Activated CD4-positive, alpha-beta T cell treated with anti-CD3 and anti-CD28 coated beads, Interleukin-2, amount 10 ng/mL, durations not matched to agents 24 days and 14 days (primary cell): ENCODE measurements at regions of chr2 and their contacts with region 1.

Region 1: GRCh38 chr2:68766376-68766845 is 31.8 kb downstream of the ARHGAP25 start:
- DNase-seq: peak; percentile 92
- H3K4me3 Mint-ChIP-seq: peak overlapping the region; percentile 76
- H3K27ac Mint-ChIP-seq: peak overlapping the region; percentile 95
- H3K4me1 Mint-ChIP-seq: peaks cover 86% of the 10 kb centered on the region
- H3K27me3 Mint-ChIP-seq: no peaks in the 10 kb centered on the region

Region 2: GRCh38 chr2:68653538-68653982 is 112.9 kb before region 1 on chr2:
- intact Hi-C with region 1: loop called (anchors 1 kb)
- DNase-seq: peak; percentile 88
- H3K4me3 Mint-ChIP-seq: peak overlapping the region; percentile 66
- H3K27ac Mint-ChIP-seq: peak overlapping the region; percentile 71
- H3K4me1 Mint-ChIP-seq: peaks cover 46% of the 10 kb centered on the region
- H3K27me3 Mint-ChIP-seq: peaks cover 36% of the 10 kb centered on the region

Region 3: GRCh38 chr2:68726608-68727367 is 39.6 kb before region 1 on chr2:
- intact Hi-C with region 1: loop called (anchors 2 kb)
- DNase-seq: peak; percentile 92
- H3K4me3 Mint-ChIP-seq: peak overlapping the region; percentile 56
- H3K27ac Mint-ChIP-seq: peak overlapping the region; percentile 82
- H3K4me1 Mint-ChIP-seq: peaks cover 70% of the 10 kb centered on the region
- H3K27me3 Mint-ChIP-seq: no peaks in the 10 kb centered on the region

Region 4: GRCh38 chr2:68741238-68741637 is 25.2 kb before region 1 on chr2:
- intact Hi-C with region 1: loop called (anchors 1 kb)
- DNase-seq: peak; percentile 73
- H3K4me3 Mint-ChIP-seq: no peak overlapping the region
- H3K27ac Mint-ChIP-seq: peak overlapping the region; percentile 98
- H3K4me1 Mint-ChIP-seq: peaks cover 85% of the 10 kb centered on the region
- H3K27me3 Mint-ChIP-seq: no peaks in the 10 kb centered on the region

Region 5: DNA sequence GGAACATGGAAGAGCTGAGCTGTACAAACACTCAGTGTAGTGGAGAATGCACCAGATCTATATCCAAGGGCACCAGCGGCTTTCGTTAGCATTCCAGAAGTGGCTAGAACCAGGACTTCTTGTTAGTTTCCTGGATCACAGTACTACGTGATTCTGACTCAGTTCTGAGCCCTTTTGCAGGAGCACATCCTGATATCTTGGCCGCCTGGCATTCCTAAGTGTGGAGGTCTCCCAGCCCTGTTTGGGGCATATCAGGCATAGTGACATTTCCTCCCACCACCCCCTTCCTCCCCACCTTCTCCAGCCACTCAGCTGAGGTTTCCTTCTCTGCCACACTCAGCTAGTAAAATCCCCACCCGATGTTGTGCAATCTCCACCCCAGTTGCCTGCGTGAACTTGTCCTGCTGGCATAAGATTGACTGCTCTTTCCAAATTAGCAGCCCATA is 41.4 kb after region 1 on chr2:
- intact Hi-C with region 1: no loop called
- DNase-seq: no peak
- H3K4me3 Mint-ChIP-seq: no peak overlapping the region
- H3K27ac Mint-ChIP-seq: no peak overlapping the region
- H3K4me1 Mint-ChIP-seq: peaks cover 27% of the 10 kb centered on the region
- H3K27me3 Mint-ChIP-seq: no peaks in the 10 kb centered on the region

Region 6: DNA sequence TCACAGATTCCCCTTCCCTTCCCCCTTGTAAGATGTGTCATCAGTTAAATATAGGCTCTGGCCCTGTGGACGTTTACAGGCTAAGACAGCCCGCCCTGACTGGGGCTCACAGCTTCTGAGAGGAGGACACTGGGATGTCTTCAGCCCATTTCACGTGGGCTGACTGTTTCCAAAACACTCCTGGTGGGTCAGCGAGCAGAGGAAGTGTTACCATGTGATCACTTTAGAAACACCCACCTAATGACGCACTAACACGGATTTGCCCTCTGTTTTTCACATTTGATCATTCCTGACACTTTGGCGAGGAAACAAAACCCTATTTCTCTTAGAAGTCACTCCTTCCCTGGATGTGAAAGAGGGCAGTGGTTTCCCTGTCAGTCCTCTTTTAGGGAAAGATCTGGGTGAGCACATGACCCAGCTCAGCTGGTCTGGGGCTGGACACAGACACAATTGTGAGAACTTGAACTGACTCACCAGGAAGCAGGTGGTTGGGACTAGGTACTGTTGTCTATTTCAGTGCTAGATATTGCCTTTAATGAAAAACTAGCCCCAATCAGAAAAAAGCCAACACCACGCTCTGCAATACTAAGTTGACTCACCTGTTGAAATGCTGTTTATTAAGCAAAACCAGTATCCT is 65.9 kb after region 1 on chr2:
- intact Hi-C with region 1: loop called (anchors 2 kb)
- DNase-seq: peak; percentile 74
- H3K4me3 Mint-ChIP-seq: peak overlapping the region; percentile 57
- H3K27ac Mint-ChIP-seq: peak overlapping the region; percentile 85
- H3K4me1 Mint-ChIP-seq: peaks cover 73% of the 10 kb centered on the region
- H3K27me3 Mint-ChIP-seq: no peaks in the 10 kb centered on the region

Region 7: DNA sequence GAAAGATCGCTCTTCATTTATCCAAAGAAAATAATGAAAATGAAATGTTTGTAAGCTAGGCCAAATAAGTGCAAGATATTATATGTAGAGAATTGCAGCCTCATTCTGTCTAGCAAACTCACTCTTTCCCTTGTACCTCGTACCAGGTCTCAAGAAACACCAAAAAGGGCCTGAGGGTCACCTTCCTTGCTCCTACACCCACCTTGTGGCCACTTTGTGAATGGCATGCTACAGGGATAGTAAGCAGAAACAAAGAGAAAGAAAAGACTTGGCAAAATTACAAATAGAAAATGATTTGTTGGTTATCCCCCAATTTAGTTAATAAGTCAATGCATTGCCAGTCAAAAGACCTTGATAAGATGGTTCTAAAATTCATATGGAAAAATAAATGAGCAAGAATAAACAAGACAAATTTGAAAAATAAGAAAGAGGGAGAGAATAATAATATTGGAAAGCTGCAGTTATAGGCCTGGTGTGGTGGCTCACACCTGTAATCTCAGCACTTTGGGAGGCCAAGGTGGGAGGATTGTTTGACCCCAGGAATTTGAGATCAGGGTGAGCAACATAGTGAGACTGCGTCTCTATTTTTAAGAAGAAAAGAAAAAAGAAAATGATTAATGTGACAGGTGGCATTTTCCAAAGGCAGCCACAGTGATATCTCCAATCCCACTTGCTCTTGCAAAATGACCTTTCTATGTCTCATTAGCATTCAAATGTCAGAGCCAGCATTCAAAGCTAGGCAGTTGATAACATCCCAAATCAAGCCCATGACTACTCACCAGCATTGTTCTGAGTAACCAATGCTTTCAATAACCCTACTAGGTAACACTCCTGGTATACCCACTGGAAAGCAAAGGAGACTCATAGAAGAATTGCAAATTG is 143.6 kb after region 1 on chr2:
- intact Hi-C with region 1: loop called (anchors 2 kb)
- DNase-seq: peak; percentile 91
- H3K4me3 Mint-ChIP-seq: peak overlapping the region; percentile 13
- H3K27ac Mint-ChIP-seq: peak overlapping the region; percentile 67
- H3K4me1 Mint-ChIP-seq: peaks cover 35% of the 10 kb centered on the region
- H3K27me3 Mint-ChIP-seq: no peaks in the 10 kb centered on the region